ENCODE measurements at regions of chr19 and their contacts with region 1.

Region 1: DNA sequence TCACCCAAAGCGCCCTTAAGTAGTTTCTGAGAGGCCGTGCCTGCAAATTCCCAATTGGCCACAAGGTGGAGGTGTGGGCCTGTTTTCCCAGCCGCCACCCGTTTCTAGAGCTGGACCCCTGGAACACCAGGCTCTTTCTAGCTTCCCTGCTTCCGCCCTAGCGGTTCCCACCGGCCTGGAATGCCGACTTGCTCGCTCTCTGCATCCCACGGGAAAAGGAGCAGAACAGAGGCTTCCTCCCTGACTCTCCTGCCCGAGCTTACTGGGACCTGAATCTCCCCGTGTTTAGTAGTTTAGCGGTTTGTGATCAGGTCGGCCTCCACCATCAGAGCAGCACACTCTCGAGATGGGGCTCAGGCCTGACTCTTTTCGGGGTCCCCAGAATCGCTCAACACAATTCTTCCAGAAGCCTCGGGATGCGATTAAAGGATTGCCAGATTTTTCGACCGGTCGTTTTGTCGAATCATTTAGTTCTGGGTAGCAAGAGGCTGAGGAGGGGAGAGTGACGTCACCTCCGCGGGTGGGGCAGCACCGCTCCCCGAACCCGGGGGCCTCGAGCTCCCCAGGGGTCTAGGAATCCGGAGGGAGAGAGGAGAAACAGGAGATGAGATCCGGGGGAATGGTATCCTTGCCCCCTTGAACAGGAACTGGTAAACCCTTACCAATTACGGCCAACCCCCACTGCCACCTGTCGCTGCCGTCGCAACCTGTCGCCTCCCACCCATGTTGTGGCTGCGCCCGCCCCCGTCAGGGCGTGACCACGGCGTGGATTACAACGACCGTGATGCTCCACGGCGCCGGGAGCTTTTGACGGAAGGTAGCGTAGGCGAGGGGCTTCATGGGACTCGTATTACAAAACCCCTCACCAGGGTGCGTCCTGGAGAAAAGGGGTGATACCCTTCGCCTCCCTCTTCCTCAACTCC is 8.0 kb downstream of the NAPSA start:
- DNase-seq: peak; percentile 82
- ATAC-seq: peak; percentile 82
- H3K4me3 Mint-ChIP-seq: peak overlapping the region; percentile 91
- H3K27ac Mint-ChIP-seq: peak overlapping the region; percentile 98
- H3K4me1 Mint-ChIP-seq: peaks cover 54% of the 10 kb centered on the region
- H3K27me3 Mint-ChIP-seq: no peaks in the 10 kb centered on the region
- CTCF ChIP-seq: no peak

Region 2: GRCh38 chr19:49929611-49930482 is 427.6 kb before region 1 on chr19:
- CTCF ChIA-PET with region 1: no interaction called
- POLR2A ChIA-PET with region 1: no interaction called
- intact Hi-C with region 1: no loop called
- DNase-seq: peak; percentile 84
- ATAC-seq: peak; percentile 83
- H3K4me3 Mint-ChIP-seq: peak overlapping the region; percentile 92
- H3K27ac Mint-ChIP-seq: peak overlapping the region; percentile 89
- H3K4me1 Mint-ChIP-seq: peaks cover 48% of the 10 kb centered on the region
- H3K27me3 Mint-ChIP-seq: no peaks in the 10 kb centered on the region
- CTCF ChIP-seq: no peak

Region 3: DNA sequence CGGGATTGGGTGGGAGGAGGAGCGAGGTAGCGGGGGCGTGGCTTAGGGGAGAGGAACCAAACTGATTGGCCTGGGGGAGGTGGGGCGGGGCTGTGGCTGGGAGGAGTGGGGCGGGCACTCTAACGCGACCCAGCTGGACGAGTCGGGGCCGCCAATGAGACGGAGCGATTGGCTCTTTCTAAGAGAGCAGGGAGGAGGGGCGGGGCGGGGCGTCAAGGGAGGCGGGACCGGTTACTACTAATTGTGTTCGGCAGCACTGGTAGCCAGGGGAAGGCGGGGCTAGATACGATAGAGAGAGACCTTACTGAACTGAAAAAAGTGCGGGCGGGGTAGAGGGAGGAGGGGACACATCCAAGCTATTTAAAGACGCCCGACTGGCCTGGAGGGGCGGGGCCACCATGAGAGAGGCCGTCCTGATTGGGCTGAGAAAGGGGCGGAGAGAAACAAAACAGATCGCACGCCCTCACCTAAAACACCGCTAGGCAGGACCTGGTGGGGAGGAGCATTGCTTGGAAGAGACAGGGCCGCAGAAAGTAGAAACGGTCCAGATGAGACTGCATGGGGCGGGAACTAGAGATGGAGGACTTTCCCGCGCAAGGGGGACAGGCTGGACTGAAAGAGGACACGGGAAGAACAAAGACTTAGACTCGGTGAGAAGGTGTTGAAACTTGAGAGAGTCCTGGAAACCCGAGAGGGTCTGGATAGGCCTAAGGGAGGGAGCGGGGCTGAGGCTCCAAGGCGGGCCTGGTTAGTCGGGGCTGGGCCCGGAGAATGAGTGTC is 28.1 kb before region 1 on chr19 and contains the start of gene KCNC3:
- CTCF ChIA-PET with region 1: interaction called, 20 read pairs
- POLR2A ChIA-PET with region 1: interaction called, 408 read pairs
- intact Hi-C with region 1: loop called (anchors 1 kb)
- DNase-seq: peak; percentile 91
- ATAC-seq: peak; percentile 64
- H3K4me3 Mint-ChIP-seq: peak within 1 kb of the TSS; percentile 93
- H3K27ac Mint-ChIP-seq: peak within 1 kb of the TSS; percentile 98
- H3K4me1 Mint-ChIP-seq: peaks cover 78% of the 10 kb centered on the region
- H3K27me3 Mint-ChIP-seq: peaks cover 5% of the 10 kb centered on the region
- CTCF ChIP-seq: no peak
- total RNA-seq, gene KCNC3: 34.5 and 44.3 TPM in 2 replicates

Region 4: DNA sequence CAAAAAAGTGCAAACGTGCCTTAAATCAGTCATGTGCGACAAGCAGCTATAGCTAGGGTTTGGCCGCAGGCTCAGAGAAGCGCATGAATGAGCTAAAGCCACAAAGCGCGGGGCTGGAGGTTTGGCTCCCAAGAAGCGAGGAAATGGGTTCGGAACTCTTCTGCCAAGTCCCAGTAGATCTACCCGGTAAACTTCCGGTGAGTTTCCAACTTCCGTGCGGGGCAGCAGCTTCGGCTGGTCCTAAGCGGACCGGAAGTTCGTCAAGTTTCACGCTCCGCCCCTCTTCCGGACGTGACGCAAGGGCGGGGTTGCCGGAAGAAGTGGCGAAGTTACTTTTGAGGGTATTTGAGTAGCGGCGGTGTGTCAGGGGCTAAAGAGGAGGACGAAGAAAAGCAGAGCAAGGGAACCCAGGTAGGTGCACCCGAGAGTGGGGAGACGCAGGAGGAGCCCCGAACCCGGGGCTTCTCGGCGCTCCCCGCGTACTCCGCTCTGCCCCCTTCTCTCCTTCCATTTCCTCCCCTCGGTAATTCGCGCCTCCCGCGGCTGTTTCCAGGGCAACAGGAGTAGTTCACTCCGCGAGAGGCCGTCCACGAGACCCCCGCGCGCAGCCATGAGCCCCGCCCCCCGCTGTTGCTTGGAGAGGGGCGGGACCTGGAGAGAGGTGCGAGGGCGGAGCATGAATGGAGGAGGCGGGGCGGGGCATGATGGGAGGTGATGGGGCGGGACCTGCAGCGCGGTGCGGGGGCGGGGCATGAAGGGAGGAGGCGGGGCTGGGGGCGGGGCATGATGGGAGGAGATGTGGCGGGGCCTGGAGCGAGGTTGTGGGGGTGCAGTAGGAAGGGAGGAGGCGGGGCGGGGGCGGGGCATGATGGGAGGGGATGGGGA is 19.0 kb after region 1 on chr19 and contains the start of gene NR1H2:
- CTCF ChIA-PET with region 1: interaction called, 3 read pairs
- POLR2A ChIA-PET with region 1: interaction called, 27 read pairs
- intact Hi-C with region 1: loop called (anchors 1 kb)
- DNase-seq: peak; percentile 90
- ATAC-seq: peak; percentile 88
- H3K4me3 Mint-ChIP-seq: peak within 1 kb of the TSS; percentile 99
- H3K27ac Mint-ChIP-seq: peak within 1 kb of the TSS; percentile 99
- H3K4me1 Mint-ChIP-seq: peaks cover 14% of the 10 kb centered on the region
- H3K27me3 Mint-ChIP-seq: no peaks in the 10 kb centered on the region
- CTCF ChIP-seq: no peak
- total RNA-seq, gene NR1H2: 66.9 and 79.5 TPM in 2 replicates

Region 5: GRCh38 chr19:50394017-50394416 is 36.6 kb after region 1 on chr19:
- CTCF ChIA-PET with region 1: no interaction called
- POLR2A ChIA-PET with region 1: no interaction called
- intact Hi-C with region 1: no loop called
- DNase-seq: no peak
- ATAC-seq: no peak
- H3K4me3 Mint-ChIP-seq: no peak overlapping the region
- H3K27ac Mint-ChIP-seq: no peak overlapping the region
- H3K4me1 Mint-ChIP-seq: no peaks in the 10 kb centered on the region
- H3K27me3 Mint-ChIP-seq: no peaks in the 10 kb centered on the region
- CTCF ChIP-seq: no peak

Region 6: GRCh38 chr19:50461066-50461875 is 103.8 kb after region 1 on chr19:
- CTCF ChIA-PET with region 1: interaction called, 33 read pairs
- POLR2A ChIA-PET with region 1: interaction called, 36 read pairs
- intact Hi-C with region 1: loop called (anchors 1 kb)
- DNase-seq: peak; percentile 61
- ATAC-seq: peak; percentile 65
- H3K4me3 Mint-ChIP-seq: peak overlapping the region; percentile 44
- H3K27ac Mint-ChIP-seq: peak overlapping the region; percentile 90
- H3K4me1 Mint-ChIP-seq: peaks cover 24% of the 10 kb centered on the region
- H3K27me3 Mint-ChIP-seq: no peaks in the 10 kb centered on the region
- CTCF ChIP-seq: peak; percentile 29

Region 7: GRCh38 chr19:50547385-50548190 is 190.1 kb after region 1 on chr19:
- CTCF ChIA-PET with region 1: no interaction called
- POLR2A ChIA-PET with region 1: interaction called, 10 read pairs
- intact Hi-C with region 1: no loop called
- DNase-seq: no peak
- ATAC-seq: no peak
- H3K4me3 Mint-ChIP-seq: no peak overlapping the region
- H3K27ac Mint-ChIP-seq: no peak overlapping the region
- H3K4me1 Mint-ChIP-seq: peaks cover 4% of the 10 kb centered on the region
- H3K27me3 Mint-ChIP-seq: peaks cover 31% of the 10 kb centered on the region
- CTCF ChIP-seq: no peak

Measured in activated B cell treated with CpG ODN at 0.5 μM for 24 hours (primary cell).